ENCODE measurements at regions of chr1 and their contacts with region 1.

Region 1: DNA sequence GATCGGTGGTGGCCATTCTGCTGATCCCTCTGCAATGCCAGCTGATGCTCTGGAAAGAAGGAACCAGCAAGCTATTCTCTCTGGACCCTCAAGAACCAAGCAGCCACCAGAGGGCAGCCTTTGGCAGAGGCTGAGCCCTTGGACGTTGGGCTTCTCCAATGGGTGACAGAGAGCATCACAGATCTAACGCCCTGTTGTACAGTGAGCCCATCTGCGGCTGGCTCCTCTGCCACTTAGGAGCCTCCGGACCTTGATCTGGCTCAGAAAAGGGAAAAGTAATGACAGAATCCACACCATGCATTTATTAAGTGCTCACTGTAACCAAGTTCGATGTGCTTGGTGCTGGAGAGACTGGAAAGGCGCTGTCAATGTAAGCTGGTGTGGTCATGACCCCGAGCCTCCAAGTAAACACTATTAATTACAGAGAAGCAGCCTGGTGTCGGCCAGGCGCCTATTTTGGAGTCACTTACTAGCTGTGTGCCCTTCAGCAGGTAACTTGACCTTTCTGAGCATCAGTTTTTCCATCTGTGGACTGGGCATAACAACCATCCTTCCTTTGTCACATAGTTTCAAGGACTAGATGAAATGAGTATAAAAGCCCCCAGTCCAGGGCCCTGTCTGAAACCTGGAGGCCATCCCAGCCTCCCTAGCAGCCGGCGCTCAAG is 34.9 kb downstream of the ECE1 start:
- DNase-seq: peak; percentile 91 to 98 (median 94)
- H3K4me3 ChIP-seq: no peak overlapping the region
- H3K27ac ChIP-seq: peak overlapping the region in 3 of 5 donors; percentile 70 to 93 (median 76)
- H3K4me1 ChIP-seq: peaks cover 11 to 58% of the 10 kb centered on the region in 2 donors
- H3K27me3 ChIP-seq: no peaks in the 10 kb centered on the region
- CTCF ChIP-seq: peak; percentile 66 to 94 (median 89)
- POLR2A ChIP-seq: no peak

Region 2: DNA sequence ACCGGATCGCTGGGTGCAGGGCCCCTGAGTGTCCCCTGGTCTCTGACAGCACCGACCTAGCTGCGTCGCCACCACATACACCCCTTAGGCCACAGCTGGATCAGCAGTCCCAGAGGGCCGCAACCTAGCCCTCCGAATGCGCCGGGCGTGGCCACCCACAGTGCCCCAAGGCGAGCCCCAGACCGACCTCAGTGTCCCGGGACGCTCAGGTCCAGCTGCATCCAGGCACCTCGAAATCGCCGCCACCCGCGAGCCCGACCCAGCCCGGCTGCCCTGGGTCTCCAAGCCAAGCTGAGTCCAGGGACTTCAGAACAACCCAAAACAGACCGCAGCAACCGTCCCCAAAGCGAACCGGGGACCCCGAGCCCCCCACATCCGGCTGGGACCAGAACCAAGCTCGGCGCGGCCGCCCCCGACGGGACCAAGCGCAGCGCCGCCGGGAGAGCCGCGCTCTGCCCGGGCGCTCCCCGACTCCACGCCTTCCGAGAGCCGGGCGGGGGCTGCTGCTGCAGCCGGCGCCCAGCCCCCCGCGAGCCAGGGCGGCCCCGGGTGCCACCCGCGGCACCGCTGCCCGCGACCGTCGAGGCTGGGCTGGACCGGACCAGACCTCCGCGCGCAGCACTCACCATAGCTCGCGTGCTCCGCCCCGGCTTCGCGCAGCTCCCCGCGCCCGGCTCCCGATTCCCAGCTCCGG is 89.5 kb after region 1 on chr1:
- intact Hi-C with region 1: loop called in 1 of 2 experiments (anchors 5 kb)
- DNase-seq: peak in 3 of 7 donors; percentile 38 to 55 (median 52)
- H3K4me3 ChIP-seq: peak overlapping the region; percentile 40 to 96 (median 62)
- H3K27ac ChIP-seq: peak overlapping the region; percentile 84 to 96 (median 94)
- H3K4me1 ChIP-seq: peaks cover 39 to 41% of the 10 kb centered on the region in 2 donors
- H3K27me3 ChIP-seq: no peaks in the 10 kb centered on the region
- CTCF ChIP-seq: no peak
- POLR2A ChIP-seq: peak in 1 of 2 donors; percentile 97